Gastrocnemius medialis (tissue), 4 donors: ENCODE measurements at regions of chr13 and their contacts with region 1.

Region 1: DNA sequence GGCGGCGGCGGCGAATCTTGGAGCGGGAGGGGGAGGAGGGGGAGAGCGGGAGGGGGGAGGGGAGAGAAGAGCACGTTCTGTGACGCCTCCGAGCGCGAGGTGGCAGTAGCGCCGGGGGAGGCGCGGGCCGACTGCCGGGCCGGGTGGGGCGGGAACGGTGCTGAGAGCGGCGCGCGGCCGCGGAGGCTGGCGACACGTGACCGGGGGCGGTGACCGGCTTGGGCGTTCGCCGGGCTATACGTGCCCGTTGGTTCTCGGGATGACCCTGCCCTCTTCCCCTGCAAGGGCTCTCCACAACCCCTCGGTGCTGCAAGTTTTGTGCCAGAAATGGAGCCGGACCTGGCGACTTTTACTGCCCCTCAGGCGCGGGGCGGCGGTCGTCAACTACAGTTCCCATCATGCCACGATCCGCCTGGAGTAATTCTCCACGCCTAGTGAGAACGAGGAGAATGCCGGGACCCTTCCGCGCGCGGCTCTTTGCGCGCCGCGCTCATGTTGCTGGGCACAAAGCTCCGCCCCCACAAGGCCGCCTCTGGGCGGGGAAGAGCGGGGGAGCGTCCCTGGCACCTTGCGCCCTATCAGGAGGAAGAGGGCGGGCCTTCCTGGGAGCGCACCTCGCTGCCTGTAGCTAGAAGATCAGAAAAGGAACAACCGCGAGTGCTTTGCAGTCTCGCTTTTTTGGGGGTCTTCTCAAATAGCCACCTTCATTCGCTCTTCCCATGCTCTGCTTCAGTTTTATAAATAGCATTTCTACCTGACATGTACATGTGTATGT is at the start of gene KPNA3:
- DNase-seq: peak; percentile 93 to 96
- ATAC-seq: peak; percentile 82 to 83
- H3K4me3 ChIP-seq: peak within 1 kb of the TSS; percentile 73 to 91 (median 76)
- H3K27ac ChIP-seq: peak within 1 kb of the TSS; percentile 92 to 98 (median 94)
- H3K4me1 ChIP-seq: peaks cover 32 to 36% of the 10 kb centered on the region in 2 donors
- H3K27me3 ChIP-seq: no peaks in the 10 kb centered on the region
- CTCF ChIP-seq: peak in 2 of 5 experiments; percentile 18 to 24
- POLR2A ChIP-seq: peak; percentile 66 to 89
- total RNA-seq, gene KPNA3: 73.3 to 154 (median 113) TPM

Region 2: GRCh38 chr13:49585220-49586157 is 207.2 kb before region 1 on chr13 and contains the start of gene RCBTB1:
- in situ Hi-C with region 1: no loop called
- intact Hi-C with region 1: loop called (anchors 5 kb)
- DNase-seq: peak; percentile 8 to 41
- ATAC-seq: peak; percentile 94 to 96
- H3K4me3 ChIP-seq: peak within 1 kb of the TSS; percentile 74 to 95 (median 92)
- H3K27ac ChIP-seq: peak within 1 kb of the TSS; percentile 61 to 77 (median 72)
- H3K4me1 ChIP-seq: peaks cover 7 to 8% of the 10 kb centered on the region in 2 donors
- H3K27me3 ChIP-seq: no peaks in the 10 kb centered on the region
- CTCF ChIP-seq: peak in 1 of 5 experiments; percentile 18
- POLR2A ChIP-seq: peak in 1 of 2 donors; percentile 29
- total RNA-seq, gene RCBTB1: 5.3 to 14.4 (median 5.7) TPM

Region 3: DNA sequence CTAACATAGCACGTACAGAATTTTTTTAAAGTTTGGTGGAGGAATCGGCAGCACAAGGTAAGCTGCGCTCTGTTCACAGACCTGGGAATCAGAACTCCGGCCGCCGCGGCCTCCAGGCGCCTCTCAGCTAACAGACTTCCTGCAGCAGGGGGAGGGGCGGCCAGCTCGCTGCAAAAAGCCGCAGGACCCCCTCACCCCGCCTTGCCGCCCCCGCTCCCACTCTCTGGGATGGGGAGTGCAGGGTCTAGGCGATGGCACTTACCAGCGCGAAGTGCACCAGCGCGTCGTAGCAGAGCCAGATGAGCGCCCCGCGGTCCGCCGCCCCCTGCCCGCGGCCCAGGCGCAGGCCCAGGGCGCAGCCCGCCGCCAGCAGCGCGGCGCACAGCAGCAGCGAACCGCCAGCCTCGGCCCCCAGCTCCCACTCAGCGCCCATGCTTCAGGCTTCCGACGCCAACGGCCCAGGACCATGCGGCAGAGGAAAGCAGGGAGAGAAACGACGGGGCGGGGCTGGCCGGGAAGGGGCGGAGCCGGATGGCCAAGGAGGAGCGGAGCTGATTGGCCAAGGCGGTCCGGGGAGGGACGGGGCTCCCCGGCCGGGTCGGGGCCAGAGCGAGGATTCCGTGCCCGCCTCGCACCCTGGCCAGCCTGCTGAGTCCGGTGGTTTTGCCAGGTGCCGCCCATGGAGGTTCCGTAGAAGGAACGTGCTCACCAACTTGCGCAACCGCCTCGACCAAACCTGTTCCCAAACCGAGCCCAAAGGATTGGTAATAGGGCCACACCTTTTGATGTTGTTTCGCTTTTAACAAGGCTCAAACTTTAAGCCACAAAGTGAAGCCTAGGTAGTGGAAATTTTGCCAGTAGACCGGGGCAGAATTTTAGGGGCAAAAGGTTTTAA is 101.5 kb before region 1 on chr13 and contains the start of gene EBPL:
- in situ Hi-C with region 1: loop called in 2 of 4 experiments (anchors 10 kb)
- intact Hi-C with region 1: loop called (anchors 1 kb)
- DNase-seq: peak; percentile 90 to 91
- ATAC-seq: peak; percentile 92 to 95
- H3K4me3 ChIP-seq: peak within 1 kb of the TSS; percentile 63 to 81 (median 72)
- H3K27ac ChIP-seq: peak within 1 kb of the TSS; percentile 76 to 89 (median 84)
- H3K4me1 ChIP-seq: peaks cover 13 to 15% of the 10 kb centered on the region in 2 donors
- H3K27me3 ChIP-seq: no peaks in the 10 kb centered on the region
- CTCF ChIP-seq: no peak
- POLR2A ChIP-seq: peak in 1 of 2 donors; percentile 40
- total RNA-seq, gene EBPL: 3.8 to 11.0 (median 8.8) TPM

Region 4: GRCh38 chr13:49840266-49840665 is 47.5 kb after region 1 on chr13:
- in situ Hi-C with region 1: no loop called
- intact Hi-C with region 1: loop called (anchors 5 kb)
- DNase-seq: no peak
- ATAC-seq: no peak
- H3K4me3 ChIP-seq: no peak overlapping the region
- H3K27ac ChIP-seq: no peak overlapping the region
- H3K4me1 ChIP-seq: no peaks in the 10 kb centered on the region
- H3K27me3 ChIP-seq: no peaks in the 10 kb centered on the region
- CTCF ChIP-seq: no peak
- POLR2A ChIP-seq: no peak

Region 5: GRCh38 chr13:49985129-49985528 is 192.4 kb after region 1 on chr13:
- in situ Hi-C with region 1: no loop called
- intact Hi-C with region 1: loop called (anchors 5 kb)
- DNase-seq: peak; percentile 28 to 44
- ATAC-seq: peak; percentile 67 to 81
- H3K4me3 ChIP-seq: no peak overlapping the region
- H3K27ac ChIP-seq: peak overlapping the region; percentile 44 to 57 (median 50)
- H3K4me1 ChIP-seq: peaks cover 22 to 24% of the 10 kb centered on the region in 2 donors
- H3K27me3 ChIP-seq: no peaks in the 10 kb centered on the region
- CTCF ChIP-seq: no peak
- POLR2A ChIP-seq: no peak

Region 6: DNA sequence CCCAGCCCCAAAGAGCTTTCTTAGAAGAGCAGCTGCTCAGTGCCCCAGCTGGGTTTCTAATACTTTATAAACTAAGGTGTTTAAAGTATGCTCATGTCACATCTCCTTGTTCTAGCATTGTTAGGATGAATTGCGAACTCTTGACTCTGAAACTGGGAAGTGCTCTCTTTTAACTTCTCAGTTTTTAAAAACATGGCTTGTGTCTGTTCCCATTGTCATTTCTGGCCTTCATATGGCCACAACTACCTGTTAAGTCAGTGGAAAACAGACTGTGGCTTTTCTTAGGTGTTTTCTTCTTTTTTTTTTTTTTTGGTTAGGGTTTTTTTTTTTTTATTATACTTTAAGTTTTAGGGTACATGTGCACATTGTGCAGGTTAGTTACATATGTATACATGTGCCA is 387.2 kb after region 1 on chr13:
- in situ Hi-C with region 1: no loop called
- intact Hi-C with region 1: no loop called
- DNase-seq: no peak
- ATAC-seq: no peak
- H3K4me3 ChIP-seq: no peak overlapping the region
- H3K27ac ChIP-seq: no peak overlapping the region
- H3K4me1 ChIP-seq: no peaks in the 10 kb centered on the region
- H3K27me3 ChIP-seq: no peaks in the 10 kb centered on the region
- CTCF ChIP-seq: no peak
- POLR2A ChIP-seq: no peak